Activated CD4-positive, alpha-beta T cell treated with anti-CD3 and anti-CD28 coated beads, Interleukin-2, amount 10 ng/mL, durations not matched to agents 24 days and 14 days (primary cell): ENCODE measurements at regions of chr20 and their contacts with region 1.

Region 1: DNA sequence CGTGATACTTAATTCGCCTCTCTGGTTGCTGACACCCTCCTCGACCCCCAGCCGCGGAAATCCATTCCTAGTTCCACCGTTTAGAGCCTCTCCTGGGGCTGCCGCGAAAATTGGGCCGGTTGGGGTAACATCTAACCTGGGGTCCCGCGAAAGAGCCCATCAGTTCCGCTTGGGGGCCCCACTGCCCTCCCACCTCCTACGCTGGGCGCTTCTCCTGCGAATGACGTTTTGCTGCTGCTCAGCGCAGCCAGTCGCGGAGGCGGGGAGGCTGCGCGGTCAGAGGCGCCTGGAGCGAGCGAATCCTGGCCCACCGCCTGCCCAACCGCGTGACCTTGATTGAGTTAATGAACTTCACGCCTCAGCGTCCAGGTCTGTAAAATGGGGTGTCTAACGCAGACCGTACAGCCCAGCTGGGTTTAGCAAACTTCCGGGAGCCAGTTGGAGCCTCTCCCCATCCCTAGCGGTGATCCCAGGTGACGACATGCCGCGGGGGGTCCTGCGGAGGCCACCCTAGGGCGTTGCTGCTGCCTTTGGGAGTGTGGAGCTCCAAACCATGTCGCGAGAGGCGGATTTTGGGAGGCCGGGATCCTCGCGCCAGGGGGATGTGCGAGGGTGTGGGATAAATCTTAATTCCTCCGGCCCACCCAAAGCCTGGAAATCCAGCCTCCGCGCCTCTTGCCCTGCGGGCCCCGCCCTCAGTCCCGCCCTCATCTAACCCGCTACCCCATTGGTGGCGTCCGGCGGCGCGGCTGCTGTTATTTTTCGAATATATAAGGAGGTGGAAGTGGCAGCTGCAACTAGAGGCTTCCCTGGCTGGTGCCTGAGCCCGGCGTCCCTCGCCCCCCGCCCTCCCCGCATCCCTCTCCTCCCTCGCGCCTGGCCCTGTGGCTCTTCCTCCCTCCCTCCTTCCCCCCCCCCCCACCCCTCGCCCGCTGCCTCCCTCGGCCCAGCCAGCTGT is at the start of gene CDC25B:
- DNase-seq: peak; percentile 96
- H3K4me3 Mint-ChIP-seq: peak within 1 kb of the TSS; percentile 97
- H3K27ac Mint-ChIP-seq: peak within 1 kb of the TSS; percentile 96
- H3K4me1 Mint-ChIP-seq: peaks cover 44% of the 10 kb centered on the region
- H3K27me3 Mint-ChIP-seq: no peaks in the 10 kb centered on the region
- total RNA-seq, gene CDC25B: 70.7 and 75.5 TPM in 2 replicates

Region 2: GRCh38 chr20:3811467-3812258 is 15.9 kb after region 1 on chr20:
- intact Hi-C with region 1: loop called (anchors 1 kb)
- DNase-seq: peak; percentile 94
- H3K4me3 Mint-ChIP-seq: peak overlapping the region; percentile 81
- H3K27ac Mint-ChIP-seq: peak overlapping the region; percentile 99
- H3K4me1 Mint-ChIP-seq: peaks cover 59% of the 10 kb centered on the region
- H3K27me3 Mint-ChIP-seq: no peaks in the 10 kb centered on the region

Region 3: GRCh38 chr20:3846740-3847428 is 51.1 kb after region 1 on chr20 and contains the start of gene MAVS:
- intact Hi-C with region 1: loop called (anchors 2 kb)
- DNase-seq: peak; percentile 97
- H3K4me3 Mint-ChIP-seq: peak within 1 kb of the TSS; percentile 92
- H3K27ac Mint-ChIP-seq: peak within 1 kb of the TSS; percentile 90
- H3K4me1 Mint-ChIP-seq: peaks cover 21% of the 10 kb centered on the region
- H3K27me3 Mint-ChIP-seq: no peaks in the 10 kb centered on the region
- total RNA-seq, gene MAVS: 39.3 and 40.2 TPM in 2 replicates